ENCODE measurements at regions of chr15 and their contacts with region 1.

Region 1: DNA sequence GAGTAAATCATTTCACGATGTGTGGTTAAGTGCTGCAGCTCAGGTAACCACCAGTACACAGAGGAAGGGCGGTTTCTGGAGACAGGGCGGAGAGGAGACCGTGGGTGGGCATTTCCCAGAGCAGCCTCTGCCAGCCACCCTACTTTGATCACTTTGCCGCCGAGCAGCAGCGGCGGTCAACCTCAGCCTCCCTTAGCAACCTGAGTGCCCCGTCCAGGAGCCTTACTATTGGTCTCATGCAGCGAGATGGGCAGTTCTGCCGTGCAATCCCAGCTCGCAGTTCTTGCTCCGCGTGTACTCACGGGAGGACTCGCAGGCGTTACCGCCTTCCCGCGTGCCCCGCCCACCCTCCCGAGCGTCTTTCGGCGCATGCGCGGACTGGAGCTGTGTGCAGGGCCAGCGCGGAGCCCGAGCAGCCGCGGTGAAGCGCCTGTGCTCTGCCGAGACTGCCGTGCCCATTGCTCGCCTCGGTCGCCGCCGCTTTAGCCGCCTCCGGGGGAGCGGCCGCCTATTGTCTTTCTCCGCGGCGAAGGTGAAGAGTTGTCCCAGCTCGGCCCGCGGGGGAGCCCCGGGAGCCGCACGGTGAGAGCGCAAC is at the start of gene AKAP13:
- DNase-seq: peak; percentile 97
- H3K4me3 Mint-ChIP-seq: peak within 1 kb of the TSS; percentile 78
- H3K27ac Mint-ChIP-seq: peak within 1 kb of the TSS; percentile 95
- H3K4me1 Mint-ChIP-seq: peaks cover 69% of the 10 kb centered on the region
- H3K27me3 Mint-ChIP-seq: peaks cover 4% of the 10 kb centered on the region
- total RNA-seq, gene AKAP13: 153 to 170 TPM

Region 2: DNA sequence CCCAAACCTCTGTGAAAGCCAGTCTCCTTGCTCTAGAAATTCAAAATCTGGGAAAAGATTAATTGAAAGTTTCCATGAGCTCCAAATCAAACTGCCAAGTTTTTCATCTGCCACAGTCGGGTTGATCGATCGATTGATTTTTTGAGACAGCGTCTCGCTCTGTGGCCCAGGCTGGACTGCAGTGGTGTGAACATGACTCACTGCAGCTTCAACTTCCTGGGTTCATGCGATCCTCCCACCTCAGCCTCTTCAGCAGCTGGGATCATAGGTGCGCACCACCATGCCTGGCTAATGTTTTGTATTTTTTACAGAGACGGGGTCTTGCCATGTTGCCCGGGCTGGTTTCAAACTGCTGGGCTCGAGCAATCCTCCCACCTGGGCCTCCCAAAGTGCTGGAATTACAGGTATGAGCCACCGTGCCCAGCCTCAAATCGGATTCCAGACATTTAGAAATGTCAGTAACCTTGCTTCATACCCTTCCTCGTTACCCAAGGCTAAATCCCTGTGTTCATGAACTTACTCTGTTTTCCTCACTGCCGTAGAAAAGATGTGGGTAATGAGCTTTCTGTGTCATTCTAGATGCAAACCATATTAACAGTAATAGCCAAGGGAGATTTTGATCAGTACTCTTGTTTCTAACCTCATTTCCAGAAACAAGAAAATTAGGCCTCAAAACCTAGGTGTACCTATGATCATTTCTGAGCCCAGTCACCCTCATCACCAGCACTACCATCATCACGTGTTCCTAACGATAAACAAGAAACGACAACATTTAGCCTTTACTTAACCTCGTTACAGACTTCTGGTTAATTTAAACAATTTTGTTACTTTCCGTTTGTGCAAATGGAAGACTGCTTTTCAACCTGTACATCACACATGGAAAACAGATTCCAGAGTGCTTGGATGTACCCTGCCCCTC is 105.7 kb before region 1 on chr15:
- CTCF ChIA-PET with region 1: no interaction called
- POLR2A ChIA-PET with region 1: no interaction called
- DNase-seq: no peak
- H3K4me3 Mint-ChIP-seq: no peak overlapping the region
- H3K27ac Mint-ChIP-seq: no peak overlapping the region
- H3K4me1 Mint-ChIP-seq: peaks cover 2% of the 10 kb centered on the region
- H3K27me3 Mint-ChIP-seq: peaks cover 7% of the 10 kb centered on the region

Region 3: DNA sequence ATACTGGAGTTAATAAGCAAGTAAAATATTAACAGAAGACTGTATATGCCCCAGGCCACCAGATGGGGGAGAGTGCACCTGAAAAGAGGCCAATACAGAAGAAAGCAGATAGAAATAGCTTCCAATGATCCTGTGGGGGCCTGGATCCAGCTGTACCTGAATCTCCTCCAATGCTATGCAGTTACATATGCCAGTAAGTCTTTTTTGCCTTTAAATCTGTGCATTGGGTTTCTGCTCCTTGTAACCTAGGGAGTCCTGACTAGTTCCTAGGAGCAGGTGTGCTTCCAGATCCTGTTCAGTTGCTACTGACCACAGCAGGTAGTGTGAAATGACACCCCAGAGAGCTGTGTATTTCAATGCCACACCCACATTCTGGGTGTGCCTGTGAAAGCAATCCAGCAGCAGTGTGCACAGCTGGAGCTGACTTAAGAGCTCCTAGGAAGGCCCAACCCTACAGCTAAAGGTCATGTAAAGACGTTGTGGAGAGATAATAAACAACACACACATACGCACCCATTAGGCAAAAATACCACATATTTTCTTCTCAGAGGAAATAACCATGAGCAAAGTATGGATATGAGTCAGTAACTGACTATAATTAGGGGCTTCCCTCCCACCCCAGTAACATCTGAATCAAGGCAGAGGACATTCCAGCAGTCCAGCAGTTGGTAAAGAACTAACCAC is 62.1 kb before region 1 on chr15:
- CTCF ChIA-PET with region 1: interaction called, 20 read pairs
- POLR2A ChIA-PET with region 1: interaction called, 21 read pairs
- DNase-seq: peak; percentile 58
- H3K4me3 Mint-ChIP-seq: peak overlapping the region; percentile 3
- H3K27ac Mint-ChIP-seq: peak overlapping the region; percentile 82
- H3K4me1 Mint-ChIP-seq: peaks cover 57% of the 10 kb centered on the region
- H3K27me3 Mint-ChIP-seq: no peaks in the 10 kb centered on the region

Region 4: DNA sequence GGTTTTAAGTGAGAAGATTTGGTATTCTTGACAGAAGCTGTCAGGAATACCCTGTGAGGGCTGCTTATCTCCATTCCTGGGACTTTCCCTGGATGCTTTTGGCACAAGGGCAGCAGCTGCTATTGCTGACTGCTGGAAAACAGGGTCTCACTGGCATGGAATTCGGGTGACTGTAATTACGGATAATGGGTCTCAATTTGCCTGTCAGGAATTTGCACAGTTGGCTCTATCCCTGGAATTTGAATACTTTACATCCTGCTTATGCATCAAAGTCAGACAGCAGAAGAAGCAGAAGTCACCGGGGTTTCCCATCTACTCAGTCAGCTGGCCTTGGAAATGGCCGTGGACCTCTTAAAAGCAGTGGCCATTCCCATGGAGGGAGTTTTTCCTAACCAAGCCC is 25.9 kb before region 1 on chr15:
- CTCF ChIA-PET with region 1: no interaction called
- POLR2A ChIA-PET with region 1: interaction called, 16 read pairs
- DNase-seq: no peak
- H3K4me3 Mint-ChIP-seq: no peak overlapping the region
- H3K27ac Mint-ChIP-seq: no peak overlapping the region
- H3K4me1 Mint-ChIP-seq: peaks cover 24% of the 10 kb centered on the region
- H3K27me3 Mint-ChIP-seq: peaks cover 2% of the 10 kb centered on the region

Region 5: GRCh38 chr15:85407804-85408746 is 27.8 kb after region 1 on chr15:
- CTCF ChIA-PET with region 1: interaction called, 18 read pairs
- POLR2A ChIA-PET with region 1: interaction called, 64 read pairs
- DNase-seq: peak; percentile 50
- H3K4me3 Mint-ChIP-seq: peak overlapping the region; percentile 40
- H3K27ac Mint-ChIP-seq: peak overlapping the region; percentile 80
- H3K4me1 Mint-ChIP-seq: peaks cover 76% of the 10 kb centered on the region
- H3K27me3 Mint-ChIP-seq: no peaks in the 10 kb centered on the region

Region 6: DNA sequence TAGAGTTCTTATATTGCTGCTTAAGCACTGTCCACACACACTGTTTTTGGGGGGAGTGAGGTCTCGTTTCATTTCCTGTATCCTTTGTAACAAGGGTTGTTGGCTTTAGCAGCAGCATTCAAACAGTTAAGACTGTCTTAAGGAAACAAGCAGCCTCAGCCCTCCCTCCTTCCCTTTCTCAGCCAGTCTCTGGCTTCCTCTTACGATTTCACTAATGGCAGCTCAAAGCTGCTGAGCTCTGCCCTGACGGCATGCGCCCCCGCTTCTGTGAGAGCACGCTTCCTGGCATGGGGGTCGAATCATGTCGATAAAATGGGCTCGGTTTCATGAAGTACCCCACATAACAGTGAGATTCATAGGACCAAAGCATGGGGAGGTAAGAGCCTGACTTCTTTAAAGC is 309.4 kb after region 1 on chr15:
- CTCF ChIA-PET with region 1: no interaction called
- POLR2A ChIA-PET with region 1: interaction called, 11 read pairs
- DNase-seq: peak; percentile 69
- H3K4me3 Mint-ChIP-seq: peak overlapping the region; percentile 96
- H3K27ac Mint-ChIP-seq: peak overlapping the region; percentile 99
- H3K4me1 Mint-ChIP-seq: peaks cover 74% of the 10 kb centered on the region
- H3K27me3 Mint-ChIP-seq: no peaks in the 10 kb centered on the region

Measured in activated CD4-positive, alpha-beta memory T cell treated with anti-CD3 and anti-CD28 coated beads, Interleukin-2, amount 10 ng/mL, durations not matched to agents 7 days and 5 days (primary cell).